HepG2 (cell line): ENCODE measurements at regions of chr1 and their contacts with region 1.

Region 1: GRCh38 chr1:154936555-154937084 is at the start of gene PMVK:
- DNase-seq: peak; percentile 88
- ATAC-seq: peak; percentile 69
- H3K4me3 ChIP-seq: peak within 1 kb of the TSS; percentile 57 to 77 (median 69)
- H3K27ac ChIP-seq: peak within 1 kb of the TSS; percentile 99
- H3K4me1 ChIP-seq: peaks cover 74% of the 10 kb centered on the region
- H3K27me3 ChIP-seq: no peaks in the 10 kb centered on the region
- CTCF ChIP-seq: peak; percentile 96
- EP300 ChIP-seq: no peak
- POLR2A ChIP-seq: peak; percentile 67 to 77
- RAD21 ChIP-seq: peak; percentile 68
- total RNA-seq, gene PMVK: 3.9 and 7.5 TPM in 2 replicates

Region 2: DNA sequence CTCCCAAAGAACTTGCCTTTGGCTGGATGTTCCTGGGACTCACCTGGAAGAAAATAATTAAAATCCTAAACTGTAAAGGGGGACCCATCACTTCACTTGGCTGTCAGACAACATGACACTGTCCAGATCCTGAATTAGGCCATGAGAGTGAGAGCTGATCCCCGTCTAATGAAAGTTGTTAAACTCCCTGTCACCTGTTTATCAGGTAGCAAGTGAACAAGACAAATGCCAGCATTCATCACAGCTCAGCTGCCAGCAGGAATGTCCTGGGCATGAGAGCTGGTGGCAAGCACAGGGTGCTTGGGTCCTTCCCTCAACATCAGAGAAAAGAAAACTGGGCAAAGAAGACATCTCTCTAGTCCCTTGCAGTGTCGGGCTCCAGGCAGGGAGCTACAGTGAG is 23.9 kb before region 1 on chr1:
- CTCF ChIA-PET with region 1: no interaction called
- POLR2A ChIA-PET with region 1: interaction called, 14 read pairs
- in situ Hi-C with region 1: no loop called
- intact Hi-C with region 1: loop called (anchors 2 kb)
- DNase-seq: no peak
- ATAC-seq: no peak
- H3K4me3 ChIP-seq: no peak overlapping the region
- H3K27ac ChIP-seq: no peak overlapping the region
- H3K4me1 ChIP-seq: peaks cover 40% of the 10 kb centered on the region
- H3K27me3 ChIP-seq: no peaks in the 10 kb centered on the region
- CTCF ChIP-seq: no peak
- EP300 ChIP-seq: no peak
- POLR2A ChIP-seq: no peak
- RAD21 ChIP-seq: no peak

Region 3: DNA sequence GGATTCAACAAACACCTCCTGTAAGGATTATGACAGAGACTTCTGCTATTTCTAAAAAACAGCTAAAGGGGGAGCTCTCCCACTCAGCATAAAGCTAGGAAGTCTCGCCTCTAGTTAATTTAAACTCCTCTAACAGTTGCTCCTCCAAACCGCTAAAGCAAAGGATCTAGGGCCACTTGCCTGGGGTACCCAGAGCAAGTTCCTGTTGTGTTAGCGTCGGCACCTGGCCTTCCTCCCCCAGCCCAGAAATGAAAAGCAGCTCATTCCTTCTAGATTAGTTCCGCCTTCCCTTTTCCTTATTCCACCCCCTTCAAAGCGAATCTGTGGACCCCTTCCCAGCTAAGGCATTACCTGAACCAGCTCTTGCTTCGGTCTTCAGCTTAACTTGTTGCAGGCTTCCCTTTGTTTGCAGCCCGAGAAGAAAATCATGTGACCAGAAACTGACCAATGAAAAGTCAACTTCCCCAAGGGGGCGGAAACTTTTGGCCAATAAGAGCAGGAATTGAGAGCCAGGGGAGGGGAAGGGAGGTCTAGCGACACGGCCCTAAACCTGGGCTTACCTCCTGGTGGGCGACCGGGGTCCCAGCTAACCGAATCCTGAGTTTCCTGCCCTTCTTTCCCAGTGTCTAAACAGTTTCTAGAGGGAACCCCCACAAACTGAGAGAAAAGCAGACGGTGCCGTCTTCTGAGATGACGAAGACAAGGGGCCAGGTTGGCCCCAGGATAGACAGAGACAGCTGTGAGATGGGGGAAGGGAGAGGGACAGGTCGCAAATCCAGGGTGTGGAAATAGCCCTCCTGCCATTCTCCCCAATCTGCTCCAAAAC is 19.3 kb after region 1 on chr1 and contains the start of gene PBXIP1:
- CTCF ChIA-PET with region 1: no interaction called
- POLR2A ChIA-PET with region 1: interaction called, 18 read pairs
- in situ Hi-C with region 1: no loop called
- intact Hi-C with region 1: no loop called
- DNase-seq: peak; percentile 94
- ATAC-seq: peak; percentile 81
- H3K4me3 ChIP-seq: peak within 1 kb of the TSS; percentile 66 to 72 (median 69)
- H3K27ac ChIP-seq: peak within 1 kb of the TSS; percentile 96
- H3K4me1 ChIP-seq: peaks cover 55% of the 10 kb centered on the region
- H3K27me3 ChIP-seq: no peaks in the 10 kb centered on the region; a peak in 1 of 5 replicates
- CTCF ChIP-seq: 0 out of 2 replicates have a peak, but pooled peaks have one; percentile 1
- EP300 ChIP-seq: no peak
- POLR2A ChIP-seq: peak in 1 of 2 experiments; percentile 55; a peak in 2 of 4 replicates
- RAD21 ChIP-seq: 0 out of 2 replicates have a peak, but pooled peaks have one; percentile 13
- total RNA-seq, gene PBXIP1: 7.3 and 16.3 TPM in 2 replicates

Region 4: DNA sequence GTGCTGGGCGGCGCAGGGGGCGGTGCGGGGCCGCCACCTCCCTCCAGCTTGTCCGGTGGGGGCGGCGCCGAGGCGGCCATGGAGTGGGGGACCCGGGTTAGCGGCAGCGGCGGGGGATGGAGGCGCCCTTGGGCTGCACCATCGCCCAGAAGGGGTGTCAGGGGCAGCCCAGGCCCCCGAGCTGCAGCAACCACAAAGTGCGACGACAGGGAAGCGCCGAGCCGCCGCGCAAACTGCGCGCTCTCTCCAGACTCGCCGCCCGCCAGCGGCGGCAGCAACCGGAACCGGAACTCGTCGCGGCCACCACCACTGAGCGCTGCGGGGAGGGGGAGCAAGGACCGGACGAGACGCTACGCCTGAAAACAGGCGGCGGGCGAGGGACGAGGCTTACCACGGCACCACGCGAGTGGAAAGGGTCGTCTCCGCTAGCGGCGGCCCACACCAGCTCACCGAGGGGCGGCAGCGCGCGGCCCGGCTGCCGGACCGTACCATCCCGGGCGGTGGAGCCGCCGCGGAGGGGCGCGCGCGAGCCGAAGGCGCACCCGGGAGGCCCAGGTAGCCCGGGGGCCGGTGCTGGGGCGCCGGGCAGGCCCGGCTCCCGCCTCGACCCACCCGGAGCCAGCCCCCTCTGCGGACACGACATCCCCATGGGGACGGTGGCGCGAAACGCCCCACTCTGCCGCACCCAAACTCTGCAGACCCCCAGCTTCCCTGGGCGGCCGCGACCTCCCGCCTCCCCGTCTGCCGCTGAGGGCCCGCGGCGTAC is 25.1 kb after region 1 on chr1 and contains the start of gene PYGO2:
- CTCF ChIA-PET with region 1: no interaction called
- POLR2A ChIA-PET with region 1: interaction called, 18 read pairs
- in situ Hi-C with region 1: no loop called
- intact Hi-C with region 1: no loop called
- DNase-seq: peak; percentile 48
- ATAC-seq: peak; percentile 87
- H3K4me3 ChIP-seq: peak within 1 kb of the TSS; percentile 72 to 87 (median 80)
- H3K27ac ChIP-seq: peak within 1 kb of the TSS; percentile 96
- H3K4me1 ChIP-seq: peaks cover 48% of the 10 kb centered on the region
- H3K27me3 ChIP-seq: no peaks in the 10 kb centered on the region; a peak in 1 of 5 replicates
- CTCF ChIP-seq: peak; percentile 75
- EP300 ChIP-seq: 0 out of 4 replicates have a peak, but pooled peaks of 1 of the 2 experiments have one; percentile 3
- POLR2A ChIP-seq: peak; percentile 72 to 84
- RAD21 ChIP-seq: peak; percentile 95
- total RNA-seq, gene PYGO2: 20.3 and 21.3 TPM in 2 replicates